HAP-1 (cell line): ENCODE measurements at regions of chr5 and their contacts with region 1.

Region 1: DNA sequence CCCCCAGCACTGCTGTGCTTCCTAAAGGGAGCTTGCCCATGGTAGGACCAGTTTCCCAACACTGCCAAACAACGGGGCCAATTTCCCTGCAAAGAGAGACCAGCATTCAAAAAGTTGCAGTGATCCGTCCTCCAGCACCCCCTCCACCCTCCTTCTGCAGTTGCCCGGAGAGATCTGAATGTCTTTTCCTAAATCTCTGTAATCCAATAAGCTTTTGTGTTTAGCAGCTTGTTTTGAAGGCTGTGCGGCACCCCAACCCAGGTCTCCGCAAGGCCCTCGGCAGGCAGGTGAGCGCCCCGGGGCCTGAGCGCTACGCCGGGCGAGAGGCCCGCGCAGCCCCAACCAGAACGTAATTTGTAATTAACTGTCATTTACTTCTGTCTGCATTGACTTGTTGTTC is 366.9 kb upstream of the IRX2 start:
- DNase-seq: peak; percentile 82 to 85
- H3K4me3 ChIP-seq: no peak overlapping the region
- H3K4me1 ChIP-seq: peaks cover 81% of the 10 kb centered on the region
- H3K27me3 ChIP-seq: no peaks in the 10 kb centered on the region

Region 2: GRCh38 chr5:2914981-2915484 is 203.3 kb before region 1 on chr5:
- in situ Hi-C with region 1: no loop called
- DNase-seq: peak; percentile 86 to 97
- H3K4me3 ChIP-seq: no peak overlapping the region
- H3K4me1 ChIP-seq: peaks cover 11% of the 10 kb centered on the region
- H3K27me3 ChIP-seq: no peaks in the 10 kb centered on the region

Region 3: DNA sequence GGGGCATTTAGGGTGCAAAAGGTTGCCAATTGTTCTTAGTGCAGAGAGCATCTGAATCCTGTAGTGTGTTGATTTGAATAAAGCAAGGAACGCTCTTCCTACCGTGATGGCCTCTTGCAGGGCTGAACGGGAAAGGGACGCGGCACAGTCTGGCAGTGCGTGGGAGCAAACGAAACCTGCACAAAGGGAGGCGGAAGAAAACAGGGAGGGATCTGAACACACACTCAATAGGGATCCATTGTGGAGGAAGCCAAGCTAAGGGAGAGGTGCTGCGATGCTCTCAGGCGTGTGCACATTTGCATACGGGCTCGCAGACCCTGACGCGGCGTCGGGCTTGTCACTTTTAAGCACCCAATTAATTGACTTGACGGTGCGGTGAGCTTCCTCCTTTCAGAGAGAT is 63.3 kb after region 1 on chr5:
- in situ Hi-C with region 1: loop called (anchors 5 kb)
- DNase-seq: no peak
- H3K4me3 ChIP-seq: no peak overlapping the region
- H3K4me1 ChIP-seq: peaks cover 21% of the 10 kb centered on the region
- H3K27me3 ChIP-seq: no peaks in the 10 kb centered on the region

Region 4: DNA sequence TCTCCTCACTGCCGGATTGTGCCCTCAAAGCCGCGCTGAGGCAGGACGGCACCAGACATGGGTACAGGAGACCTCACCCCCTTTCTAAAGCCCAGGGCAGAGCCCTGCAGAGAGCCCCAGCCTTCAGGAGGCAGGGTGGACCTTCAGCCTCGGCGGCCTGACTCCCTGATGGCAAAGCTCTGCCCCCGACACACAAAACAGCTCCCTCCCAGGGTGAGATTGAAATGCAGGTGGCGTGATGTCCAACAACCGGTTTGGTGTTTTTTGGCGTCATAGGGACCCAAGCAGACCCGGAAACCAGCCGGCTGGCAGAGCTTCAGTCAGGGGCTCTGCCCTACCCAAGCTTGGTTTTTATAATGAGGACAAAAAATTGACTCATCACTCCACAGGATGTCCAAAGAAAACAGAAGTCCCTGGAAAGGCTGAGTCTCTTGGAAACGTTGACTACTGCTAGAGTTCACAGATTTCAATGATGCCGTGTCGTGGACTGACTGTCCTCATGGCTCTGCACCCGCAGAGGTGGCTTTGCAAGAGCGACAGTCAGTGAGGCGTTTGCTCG is 202.1 kb after region 1 on chr5:
- in situ Hi-C with region 1: no loop called
- DNase-seq: no peak
- H3K4me3 ChIP-seq: no peak overlapping the region
- H3K4me1 ChIP-seq: no peaks in the 10 kb centered on the region
- H3K27me3 ChIP-seq: no peaks in the 10 kb centered on the region